Right ventricle myocardium superior (tissue), 1 donor: ENCODE measurements at regions of chr7 and their contacts with region 1.

Region 1: DNA sequence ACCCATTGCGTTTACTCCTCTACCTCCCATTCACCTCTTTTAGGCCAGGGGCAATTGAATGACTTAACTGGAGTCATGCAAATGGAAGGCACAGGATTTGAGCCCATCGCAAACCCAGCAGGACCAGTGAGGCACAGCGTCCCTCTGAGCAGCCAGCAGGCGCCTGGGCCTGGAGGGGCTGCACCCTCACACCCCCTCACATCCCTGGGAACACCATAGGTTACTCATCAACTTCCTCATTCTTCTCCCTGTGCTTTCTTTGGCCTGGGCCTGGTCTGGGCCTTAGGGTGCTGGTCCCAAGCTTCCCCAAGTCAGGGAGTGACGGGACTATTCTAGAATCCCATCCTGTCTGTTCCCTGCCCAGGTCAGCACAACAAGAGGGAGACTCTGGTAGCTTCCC is 169.4 kb upstream of the EEPD1 start:
- DNase-seq: no peak
- ATAC-seq: no peak

Region 2: DNA sequence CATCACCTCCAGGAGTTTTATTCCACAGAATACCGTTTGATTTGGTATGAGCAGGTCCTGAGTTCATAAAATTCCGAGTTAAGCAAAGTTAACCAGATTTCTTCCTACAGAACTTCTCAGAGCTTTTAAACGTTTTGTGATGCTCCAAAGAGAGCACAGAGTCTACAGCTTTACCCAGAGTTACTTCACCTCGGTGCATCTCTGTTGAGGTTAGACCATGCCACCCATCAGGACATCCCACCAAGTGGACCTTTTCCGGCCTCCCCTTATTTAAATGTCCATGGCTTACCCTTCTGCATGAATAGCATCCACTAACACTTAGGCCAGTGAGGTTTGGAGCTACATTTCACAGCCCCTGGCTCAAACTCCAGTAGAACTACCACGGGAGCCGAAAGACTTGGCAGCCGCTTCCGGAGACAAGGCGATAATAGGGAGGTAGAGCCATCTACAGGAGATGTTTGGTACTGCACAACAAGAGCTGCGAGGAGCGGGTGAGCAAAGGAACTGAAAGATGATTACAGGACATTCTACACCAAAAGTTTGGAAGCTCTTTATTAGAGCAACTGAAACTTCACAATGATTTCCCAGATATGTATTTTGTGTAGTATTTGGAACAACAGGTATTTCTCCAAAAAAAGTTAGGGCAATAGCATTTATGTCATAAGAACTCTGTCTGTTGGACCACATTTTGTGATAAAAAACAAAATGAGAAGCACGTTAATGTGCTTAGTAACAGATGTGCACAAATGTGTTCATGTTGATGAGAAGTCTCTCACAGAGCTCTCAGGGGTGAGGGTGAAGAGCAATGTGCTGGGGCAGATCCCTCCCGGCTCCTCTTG is 463.4 kb before region 1 on chr7:
- intact Hi-C with region 1: no loop called
- DNase-seq: peak; percentile 90
- ATAC-seq: peak; percentile 93

Region 3: GRCh38 chr7:36291387-36292316 is 308.0 kb after region 1 on chr7:
- intact Hi-C with region 1: loop called (anchors 2 kb)
- DNase-seq: peak; percentile 91
- ATAC-seq: peak; percentile 97

Region 4: GRCh38 chr7:36318116-36318515 is 334.5 kb after region 1 on chr7:
- intact Hi-C with region 1: loop called (anchors 2 kb)
- DNase-seq: no peak
- ATAC-seq: no peak

Region 5: GRCh38 chr7:36459236-36459960 is 475.8 kb after region 1 on chr7:
- intact Hi-C with region 1: no loop called
- DNase-seq: no peak
- ATAC-seq: no peak